PC-9 (cell line): ENCODE measurements at regions of chr16 and their contacts with region 1.

Region 1: DNA sequence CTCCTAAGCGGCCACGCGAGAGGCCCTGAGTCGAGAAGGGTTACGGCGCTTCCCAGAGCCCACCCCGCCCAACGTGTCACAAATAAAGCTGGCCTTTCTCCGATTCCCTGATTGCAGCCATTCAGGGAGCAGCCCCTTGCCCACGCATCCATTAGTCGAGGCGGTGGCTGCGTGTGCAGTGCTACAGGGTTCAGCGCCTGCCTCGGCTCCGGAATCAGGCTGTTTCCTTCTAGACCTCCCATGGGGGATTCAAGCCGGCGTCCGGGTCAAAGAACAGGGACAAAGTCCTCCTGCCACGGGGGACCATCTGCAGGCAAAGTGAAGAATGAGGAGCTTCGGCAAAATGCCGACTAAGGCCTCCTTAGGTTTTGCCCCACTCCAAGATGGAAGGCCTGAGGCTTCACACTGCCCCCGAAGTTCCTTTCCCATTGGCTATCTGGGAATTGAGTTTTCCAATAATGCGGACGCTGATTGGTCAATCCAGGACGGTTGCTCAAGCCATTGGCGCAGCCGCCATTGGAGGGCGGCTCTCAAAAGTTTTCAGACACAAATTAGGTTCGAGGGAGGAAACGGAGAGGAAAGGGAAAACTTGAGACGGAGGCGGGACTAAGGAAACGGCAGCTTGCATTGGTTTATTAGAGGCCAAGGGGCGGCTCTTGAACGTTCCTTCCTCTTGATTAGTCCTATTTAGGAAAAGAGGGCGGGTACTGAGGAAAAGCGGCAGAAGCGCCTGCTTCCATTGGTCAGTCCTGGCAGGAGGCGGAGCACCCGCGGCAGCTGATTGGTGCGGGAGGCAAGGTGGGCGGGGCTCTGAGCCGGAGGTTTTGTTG is 430 bp upstream of the KATNB1 start:
- DNase-seq: peak; percentile 96 to 100
- H3K4me3 ChIP-seq: peak overlapping the region; percentile 90
- H3K27ac ChIP-seq: peak overlapping the region; percentile 64
- H3K4me1 ChIP-seq: peaks cover 18% of the 10 kb centered on the region
- H3K27me3 ChIP-seq: no peaks in the 10 kb centered on the region
- CTCF ChIP-seq: no peak

Region 2: DNA sequence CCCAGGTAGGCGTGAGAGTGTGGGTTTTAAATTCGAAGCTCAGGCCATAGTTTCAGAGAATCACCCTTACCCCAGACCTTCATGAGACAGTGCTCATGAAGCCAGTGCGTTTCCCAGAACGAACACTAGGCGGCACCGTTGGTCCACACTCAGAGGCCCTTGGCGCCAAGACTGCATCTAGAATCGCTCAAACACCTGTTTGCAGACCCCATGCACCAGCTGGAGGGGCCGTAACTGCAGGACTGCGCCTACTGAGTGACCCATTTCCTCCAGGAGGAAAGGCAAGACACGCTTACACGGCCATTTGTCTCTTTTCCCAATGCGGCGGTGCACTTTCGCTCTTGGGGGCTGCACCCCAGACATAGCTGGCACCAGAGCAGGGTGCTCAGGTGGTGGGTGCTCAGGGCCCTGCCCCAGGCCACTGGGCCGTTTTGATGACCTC is 158.7 kb before region 1 on chr16:
- CTCF ChIA-PET with region 1: interaction called, 4 read pairs
- POLR2A ChIA-PET with region 1: no interaction called
- intact Hi-C with region 1: loop called (anchors 5 kb)
- DNase-seq: peak; percentile 52 to 69
- H3K4me3 ChIP-seq: no peak overlapping the region
- H3K27ac ChIP-seq: no peak overlapping the region
- H3K4me1 ChIP-seq: no peaks in the 10 kb centered on the region
- H3K27me3 ChIP-seq: no peaks in the 10 kb centered on the region
- CTCF ChIP-seq: peak; percentile 95

Region 3: DNA sequence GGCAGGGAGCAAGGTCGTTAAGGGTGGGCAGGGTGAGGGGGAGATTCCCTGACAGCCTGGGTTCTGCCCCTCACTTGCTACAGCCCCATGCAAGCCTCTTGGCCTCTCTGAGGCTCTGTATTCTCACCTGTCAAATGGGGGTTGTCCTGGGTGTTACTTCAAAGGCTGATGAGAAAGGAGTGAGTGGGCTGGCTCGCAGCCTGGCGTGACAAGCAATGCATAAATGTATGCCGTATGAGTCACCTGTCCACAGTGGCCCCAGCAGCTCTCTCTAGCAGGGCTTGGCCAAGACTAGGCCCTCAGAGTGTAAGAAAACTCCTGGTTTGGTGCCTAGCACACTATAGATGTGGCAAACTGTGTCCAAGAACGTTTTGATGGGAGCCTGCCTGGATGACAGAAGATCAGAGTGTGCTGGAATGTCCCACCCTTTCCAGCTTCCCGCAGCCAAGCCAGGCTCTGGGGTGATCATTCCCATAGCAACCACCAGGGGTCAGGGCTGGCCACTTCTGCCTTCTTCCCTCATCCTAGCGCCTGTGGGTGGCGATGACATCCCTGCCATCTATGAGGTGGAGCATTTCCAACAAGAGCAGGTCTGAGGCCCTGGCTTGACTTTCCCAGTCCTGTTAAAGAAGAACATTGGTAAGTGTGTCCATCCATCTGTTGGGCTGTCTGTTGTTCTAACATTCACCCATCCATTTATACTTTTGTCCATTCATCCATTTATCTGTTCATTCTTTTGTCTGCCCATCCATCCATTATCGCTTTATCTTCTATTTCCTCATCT is 143.9 kb before region 1 on chr16:
- CTCF ChIA-PET with region 1: interaction called, 3 read pairs
- POLR2A ChIA-PET with region 1: no interaction called
- intact Hi-C with region 1: loop called (anchors 5 kb)
- DNase-seq: peak; percentile 79
- H3K4me3 ChIP-seq: no peak overlapping the region; the same call in 1 of the 2 replicates
- H3K27ac ChIP-seq: peak overlapping the region; percentile 80
- H3K4me1 ChIP-seq: peaks cover 16% of the 10 kb centered on the region
- H3K27me3 ChIP-seq: no peaks in the 10 kb centered on the region
- CTCF ChIP-seq: peak; percentile 97

Region 4: GRCh38 chr16:57810197-57811031 is 75.3 kb after region 1 on chr16:
- CTCF ChIA-PET with region 1: interaction called, 11 read pairs
- POLR2A ChIA-PET with region 1: no interaction called
- intact Hi-C with region 1: no loop called
- DNase-seq: peak; percentile 91 to 97
- H3K4me3 ChIP-seq: peak overlapping the region; percentile 23; the same call in 1 of the 2 replicates
- H3K27ac ChIP-seq: peak overlapping the region; percentile 88
- H3K4me1 ChIP-seq: peaks cover 81% of the 10 kb centered on the region
- H3K27me3 ChIP-seq: no peaks in the 10 kb centered on the region
- CTCF ChIP-seq: no peak

Region 5: DNA sequence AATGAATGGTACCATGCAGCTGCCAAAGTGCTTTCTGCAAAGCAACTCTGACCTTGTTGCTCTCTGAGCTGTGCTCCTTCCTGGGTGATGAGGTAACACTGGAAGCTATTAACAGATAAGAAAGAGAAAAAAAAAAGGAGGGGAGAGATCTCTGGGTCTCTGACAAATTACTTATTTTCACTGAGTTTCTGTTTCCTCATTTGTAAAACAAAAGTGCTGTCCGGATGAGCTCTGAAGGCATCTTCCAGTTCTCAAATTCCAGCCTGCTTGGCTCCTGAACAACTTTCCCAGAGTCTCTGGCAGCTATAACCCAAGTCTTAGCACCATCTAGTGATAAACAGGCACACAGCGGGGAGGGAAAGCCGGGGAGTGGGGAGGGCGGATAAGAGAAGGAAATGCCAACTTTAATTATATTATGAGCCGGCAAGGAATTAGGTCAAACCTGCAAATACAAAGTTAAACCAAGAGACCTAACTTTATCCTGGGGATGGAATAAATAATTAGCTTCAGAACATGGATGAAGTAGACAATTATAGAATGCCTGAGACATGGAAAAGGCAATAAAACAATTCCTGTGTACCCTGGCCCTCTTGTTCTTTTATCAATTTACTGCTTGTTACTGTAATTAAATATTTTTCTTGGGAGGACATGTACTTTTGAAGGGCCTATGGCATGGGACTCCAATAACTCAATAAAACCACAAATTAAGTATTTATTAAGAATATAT is 128.5 kb after region 1 on chr16:
- CTCF ChIA-PET with region 1: interaction called, 6 read pairs
- POLR2A ChIA-PET with region 1: interaction called, 4 read pairs
- intact Hi-C with region 1: loop called (anchors 5 kb)
- DNase-seq: peak; percentile 64 to 78
- H3K4me3 ChIP-seq: no peak overlapping the region
- H3K27ac ChIP-seq: peak overlapping the region; percentile 41
- H3K4me1 ChIP-seq: peaks cover 40% of the 10 kb centered on the region
- H3K27me3 ChIP-seq: no peaks in the 10 kb centered on the region
- CTCF ChIP-seq: peak; percentile 63